Left cardiac atrium (tissue), 4 donors: ENCODE measurements at regions of chr6 and their contacts with region 1.

Region 1: DNA sequence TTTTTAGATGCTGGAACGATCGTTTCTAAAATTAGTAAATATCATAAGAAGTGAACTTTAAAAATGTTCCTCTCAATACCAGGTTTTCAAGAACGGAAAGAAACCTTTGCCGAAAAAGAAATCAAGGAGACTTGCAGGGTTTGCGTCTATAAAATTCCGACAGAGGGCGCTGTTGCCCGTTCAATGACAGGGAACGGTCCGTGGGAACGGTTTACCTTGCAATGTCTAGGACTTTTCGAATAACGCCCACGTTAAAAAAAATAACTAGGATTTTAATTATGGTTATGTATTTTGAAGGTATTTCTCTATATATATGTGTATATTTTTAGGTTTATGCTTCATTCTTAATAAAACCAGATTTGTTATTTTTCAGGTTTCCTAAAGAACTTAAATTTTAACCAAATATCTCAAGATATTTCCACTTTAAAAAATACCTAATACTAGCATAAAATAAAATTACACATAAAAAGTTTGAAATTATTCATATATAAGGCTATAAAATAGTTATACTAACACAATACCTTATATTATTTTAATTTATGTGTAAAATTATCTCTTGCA is 2.5 kb upstream of the TFAP2B start:
- DNase-seq: peak; percentile 56
- ATAC-seq: peak in 1 of 2 donors; percentile 63

Region 2: DNA sequence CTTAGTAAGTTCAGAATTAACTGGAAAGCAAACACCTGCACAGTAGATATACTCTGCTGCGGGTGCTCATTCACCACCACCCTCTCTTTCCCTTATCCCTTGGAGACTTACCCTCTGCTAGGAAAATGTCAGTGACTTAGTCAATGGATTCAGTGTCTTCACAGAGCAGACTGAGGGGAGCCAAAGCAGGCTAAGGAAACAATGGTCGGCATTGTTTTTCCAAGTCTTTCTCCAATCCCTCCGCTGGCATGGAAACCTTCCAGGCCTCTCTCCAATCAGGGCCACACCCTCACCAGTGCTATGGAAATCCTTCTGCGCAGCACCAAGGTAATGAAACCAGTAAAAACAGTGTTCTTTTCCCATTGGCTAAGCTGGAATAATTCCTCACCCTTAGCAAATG is 533.7 kb after region 1 on chr6:
- intact Hi-C with region 1: loop called in 1 of 2 experiments (anchors 5 kb)
- DNase-seq: no peak
- ATAC-seq: no peak

Region 3: GRCh38 chr6:51959744-51960383 is 1143.7 kb after region 1 on chr6:
- intact Hi-C with region 1: loop called in 1 of 2 experiments (anchors 2 kb)
- DNase-seq: peak; percentile 61
- ATAC-seq: no peak

Region 4: DNA sequence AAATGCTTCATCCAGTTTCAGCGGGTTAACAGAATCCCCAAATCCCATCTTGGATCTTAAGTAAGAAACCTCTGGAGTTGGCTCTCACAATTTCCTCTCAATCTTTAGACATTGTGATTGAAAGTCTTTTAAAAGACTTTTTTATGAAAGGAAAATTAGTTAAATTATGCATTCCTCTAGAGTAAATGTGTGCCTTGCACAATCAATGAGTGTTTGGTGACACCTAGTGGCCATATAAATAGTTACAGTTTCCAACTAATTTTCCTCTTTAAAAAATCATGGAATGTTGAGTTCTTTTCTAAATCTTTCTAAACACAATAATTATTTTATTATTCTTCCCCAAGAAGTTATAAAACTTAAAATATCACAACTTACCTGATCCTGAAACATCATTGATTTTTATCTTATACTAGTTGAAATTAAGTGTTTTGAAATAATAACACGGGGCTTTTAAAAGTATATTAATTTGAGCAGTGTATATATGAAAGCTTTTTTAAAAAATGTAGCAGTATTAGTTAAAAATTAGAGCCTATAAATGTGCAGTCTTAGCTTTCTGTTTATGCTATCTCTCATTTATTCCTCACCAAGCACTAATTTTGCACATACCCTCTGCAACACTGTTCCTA is 1204.9 kb after region 1 on chr6:
- intact Hi-C with region 1: loop called in 1 of 2 experiments (anchors 5 kb)
- DNase-seq: no peak
- ATAC-seq: no peak